Activated naive CD8-positive, alpha-beta T cell treated with anti-CD3 and anti-CD28 coated beads, Interleukin-2, amount 10 ng/mL, durations not matched to agents 7 days and 5 days (primary cell): ENCODE measurements at regions of chr19 and their contacts with region 1.

Region 1: GRCh38 chr19:14081325-14082093 is 4.1 kb downstream of the C19orf67 start:
- DNase-seq: peak; percentile 99
- ATAC-seq: peak; percentile 92
- H3K4me3 Mint-ChIP-seq: peak overlapping the region; percentile 94
- H3K27ac Mint-ChIP-seq: peak overlapping the region; percentile 97
- H3K4me1 Mint-ChIP-seq: peaks cover 9% of the 10 kb centered on the region
- H3K27me3 Mint-ChIP-seq: no peaks in the 10 kb centered on the region

Region 2: DNA sequence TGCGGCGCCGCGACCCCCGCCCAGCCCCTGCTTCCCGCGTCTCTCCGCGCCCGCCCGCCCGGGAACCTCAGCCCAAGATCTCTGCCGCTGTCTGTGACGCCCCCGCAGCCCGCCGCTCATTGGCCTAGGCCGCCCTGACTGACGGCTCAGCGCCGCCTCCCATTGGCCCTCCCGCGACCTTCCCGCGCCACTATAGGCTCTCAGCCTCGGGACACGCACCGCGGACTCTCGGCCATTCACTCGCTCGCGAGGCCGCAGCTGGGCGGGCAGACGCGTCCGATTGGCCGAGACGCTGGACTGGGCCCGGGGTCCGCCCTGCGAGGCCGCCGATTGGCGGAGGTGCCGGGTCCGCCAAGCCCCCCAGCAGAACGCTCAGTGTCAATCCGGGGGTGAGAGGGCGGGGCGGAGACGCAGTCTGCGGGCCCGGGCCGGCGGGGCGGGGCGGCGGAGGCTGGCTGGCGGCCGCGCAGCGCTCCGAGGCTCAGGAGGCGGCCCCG is 36.2 kb after region 1 on chr19 and contains the start of gene PRKACA:
- POLR2A ChIA-PET with region 1: interaction called, 16 read pairs
- DNase-seq: peak; percentile 99
- ATAC-seq: peak; percentile 98
- H3K4me3 Mint-ChIP-seq: peak within 1 kb of the TSS; percentile 98
- H3K27ac Mint-ChIP-seq: peak within 1 kb of the TSS; percentile 88
- H3K4me1 Mint-ChIP-seq: peaks cover 40% of the 10 kb centered on the region
- H3K27me3 Mint-ChIP-seq: no peaks in the 10 kb centered on the region
- total RNA-seq, gene PRKACA: 64.1 to 66.9 TPM